ENCODE measurements at regions of chr6 and their contacts with region 1.

Region 1: DNA sequence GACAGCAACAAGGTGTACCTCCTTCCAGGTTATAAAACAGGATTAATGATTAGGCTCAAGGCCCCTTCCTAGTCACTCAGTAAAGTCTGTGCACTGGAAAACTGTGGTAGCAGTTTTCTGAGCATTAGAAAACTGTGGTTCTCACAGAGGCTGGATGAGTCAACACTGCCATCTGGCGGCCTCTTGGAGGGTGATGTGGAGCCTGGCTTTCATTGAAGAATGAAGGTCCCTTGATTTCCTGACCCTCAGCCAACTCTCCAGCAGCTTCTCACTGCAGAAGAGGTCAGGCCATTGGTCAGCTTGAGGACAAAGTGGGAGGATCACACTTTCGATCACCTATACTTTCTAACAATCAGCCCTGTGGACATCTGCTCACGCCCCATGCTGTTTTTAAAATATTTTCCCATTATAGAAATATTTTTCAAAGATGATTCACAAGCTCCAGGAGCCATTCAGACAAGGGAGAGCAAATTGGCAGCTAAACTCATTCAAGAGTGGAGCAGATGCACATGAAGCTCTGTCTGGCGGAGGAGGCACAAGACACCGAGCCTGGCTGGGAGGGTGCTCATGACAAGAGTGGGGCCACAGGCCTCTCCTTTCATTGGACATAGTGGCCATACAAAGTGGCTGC is 23.2 kb downstream of the PSMB1 start:
- DNase-seq: peak; percentile 78 to 94 (median 85)
- H3K4me3 ChIP-seq: no peak overlapping the region
- H3K27ac ChIP-seq: no peak overlapping the region
- H3K4me1 ChIP-seq: no peaks in the 10 kb centered on the region
- H3K27me3 ChIP-seq: no peaks in the 10 kb centered on the region
- CTCF ChIP-seq: peak; percentile 68 to 86 (median 84)
- POLR2A ChIP-seq: no peak

Region 2: GRCh38 chr6:169789982-169790927 is 739.7 kb before region 1 on chr6:
- intact Hi-C with region 1: loop called in 1 of 2 experiments (anchors 10 kb)
- DNase-seq: peak; percentile 72 to 84 (median 75)
- H3K4me3 ChIP-seq: peak overlapping the region in 1 of 4 donors; percentile 48
- H3K27ac ChIP-seq: peak overlapping the region in 2 of 5 donors; percentile 79 to 80
- H3K4me1 ChIP-seq: peaks cover 7 to 16% of the 10 kb centered on the region in 2 donors
- H3K27me3 ChIP-seq: no peaks in the 10 kb centered on the region
- CTCF ChIP-seq: peak; percentile 90 to 99 (median 94)
- POLR2A ChIP-seq: peak in 1 of 2 donors; percentile 14

Region 3: GRCh38 chr6:169831450-169832246 is 698.3 kb before region 1 on chr6:
- intact Hi-C with region 1: loop called in 1 of 2 experiments (anchors 10 kb)
- DNase-seq: peak; percentile 59 to 88 (median 74)
- H3K4me3 ChIP-seq: no peak overlapping the region
- H3K27ac ChIP-seq: no peak overlapping the region
- H3K4me1 ChIP-seq: peaks cover 4 to 7% of the 10 kb centered on the region in 2 donors
- H3K27me3 ChIP-seq: no peaks in the 10 kb centered on the region
- CTCF ChIP-seq: peak; percentile 88 to 96 (median 92)
- POLR2A ChIP-seq: no peak

Region 4: DNA sequence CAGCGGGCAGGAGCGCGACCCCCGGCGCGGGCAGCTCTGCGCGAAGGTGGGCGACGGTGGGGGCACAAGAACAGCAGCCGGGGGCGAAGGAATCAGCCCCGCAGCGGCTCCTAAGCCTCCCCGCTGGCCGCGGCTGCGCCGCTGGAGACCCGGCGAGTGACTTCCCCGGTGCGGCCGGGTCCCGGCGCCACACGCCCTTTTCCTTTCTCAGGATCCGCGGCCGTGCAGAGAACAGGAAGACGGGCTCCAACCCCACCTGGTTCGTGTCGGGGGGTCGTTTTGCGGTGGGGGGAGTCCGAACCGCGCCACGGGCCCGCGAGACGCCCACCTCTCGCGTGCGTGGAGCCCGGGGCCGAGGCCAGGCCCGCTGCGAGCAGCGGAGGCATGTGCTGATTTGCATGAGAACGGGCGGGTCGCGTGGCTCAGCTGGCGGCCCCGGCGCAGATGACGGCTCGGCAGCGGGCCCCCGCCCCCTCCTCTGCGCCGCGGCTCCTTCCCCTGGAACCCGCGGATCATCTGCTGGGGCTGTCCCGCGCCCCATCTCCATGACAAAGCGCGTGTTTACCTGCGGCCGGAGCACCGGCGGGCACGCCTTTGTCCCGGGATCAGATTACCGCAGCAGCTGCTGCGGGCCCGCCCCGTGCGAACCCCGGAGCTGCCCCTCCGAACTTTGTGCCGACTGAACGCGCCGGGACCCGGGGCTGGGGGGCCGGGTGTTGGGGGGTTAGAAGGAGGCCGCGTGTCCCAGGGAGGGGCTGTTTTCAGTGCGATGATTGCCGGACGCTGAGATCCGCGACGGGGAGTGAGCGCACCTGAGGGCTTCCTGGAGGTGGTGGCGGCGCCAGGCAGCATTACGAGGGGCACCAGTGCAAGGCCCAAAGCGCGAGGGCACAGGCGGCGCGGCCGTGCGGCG is 234.2 kb before region 1 on chr6:
- intact Hi-C with region 1: no loop called
- DNase-seq: peak in 2 of 7 donors; percentile 47
- H3K4me3 ChIP-seq: peak overlapping the region in 2 of 4 donors; percentile 47 to 62
- H3K27ac ChIP-seq: no peak overlapping the region
- H3K4me1 ChIP-seq: peaks cover 22 to 36% of the 10 kb centered on the region in 2 donors
- H3K27me3 ChIP-seq: peaks cover 34% of the 10 kb centered on the region
- CTCF ChIP-seq: no peak
- POLR2A ChIP-seq: no peak

Measured in adrenal gland (tissue), 19 donors.